ENCODE measurements at regions of chr9 and their contacts with region 1.

Region 1: DNA sequence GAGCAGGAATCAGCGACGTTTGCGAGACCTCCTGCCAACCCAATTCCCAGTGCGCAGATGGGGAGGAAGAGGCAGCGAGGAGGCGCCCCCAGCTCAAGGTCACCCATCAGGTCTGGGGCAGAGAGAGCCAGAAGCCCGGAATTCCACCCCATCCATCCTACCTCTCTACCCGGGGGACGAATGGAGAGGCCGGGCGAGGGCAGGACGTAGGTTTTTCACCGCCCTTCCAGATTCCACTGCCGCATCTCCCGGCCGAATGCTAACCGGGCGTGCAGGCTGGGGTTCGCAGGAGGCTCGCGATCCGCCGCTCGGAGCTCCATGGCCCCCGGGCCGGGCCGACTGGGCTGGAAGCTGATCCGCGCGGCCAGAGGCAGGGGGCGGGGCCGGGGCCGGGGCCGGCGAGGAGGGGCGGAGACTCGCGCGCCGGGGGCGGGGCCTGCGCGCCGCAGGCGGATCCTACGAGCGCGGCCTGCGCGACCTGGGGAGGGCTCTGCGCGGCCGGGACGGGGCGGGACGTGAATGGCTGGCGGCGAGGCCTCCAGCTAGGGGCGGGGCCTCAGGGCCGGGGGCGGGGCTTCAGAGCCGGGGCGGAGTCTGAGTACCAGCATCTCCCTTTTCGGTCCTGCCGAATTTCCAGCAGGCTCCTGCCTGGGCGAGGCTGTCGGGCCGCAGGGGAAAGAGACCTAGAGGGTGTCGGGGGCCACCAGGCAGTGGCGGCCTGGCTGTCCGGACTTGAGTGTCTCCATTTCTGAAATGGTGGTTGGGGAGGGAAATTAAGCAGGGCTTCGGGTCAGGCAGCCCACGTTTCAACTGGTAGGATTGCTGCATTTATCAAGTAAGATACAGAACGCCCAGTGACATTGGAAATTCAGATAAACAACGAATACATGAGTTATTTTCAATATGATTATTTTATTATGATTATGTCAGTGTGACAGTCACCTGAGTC is at the start of gene ST6GALNAC4:
- DNase-seq: peak; percentile 95
- ATAC-seq: peak; percentile 82
- H3K4me3 ChIP-seq: peak within 1 kb of the TSS; percentile 71 to 99 (median 79)
- H3K4me3 Mint-ChIP-seq: peak within 1 kb of the TSS; percentile 94
- H3K27ac ChIP-seq: peak within 1 kb of the TSS; percentile 89 to 91
- H3K27ac Mint-ChIP-seq: peak within 1 kb of the TSS; percentile 98
- H3K4me1 ChIP-seq: peaks cover 44 to 77% of the 10 kb centered on the region in 2 donors
- H3K4me1 Mint-ChIP-seq: peaks cover 68% of the 10 kb centered on the region
- H3K27me3 ChIP-seq: peaks cover 0 to 2% (median 0%) of the 10 kb centered on the region in 4 experiments
- H3K27me3 Mint-ChIP-seq: no peaks in the 10 kb centered on the region
- CTCF ChIP-seq: no peak
- total RNA-seq, gene ST6GALNAC4: 198 and 199 TPM in 2 replicates

Region 2: GRCh38 chr9:127568971-127569885 is 347.7 kb before region 1 on chr9:
- CTCF ChIA-PET with region 1: interaction called, 4 read pairs
- POLR2A ChIA-PET with region 1: interaction called, 3 read pairs
- intact Hi-C with region 1: loop called (anchors 1 kb)
- DNase-seq: peak; percentile 80
- ATAC-seq: peak; percentile 92
- H3K4me3 ChIP-seq: peak overlapping the region in 4 of 5 experiments; percentile 53 to 72 (median 65)
- H3K4me3 Mint-ChIP-seq: peak overlapping the region; percentile 93
- H3K27ac ChIP-seq: no peak overlapping the region
- H3K27ac Mint-ChIP-seq: peak overlapping the region; percentile 81
- H3K4me1 ChIP-seq: peaks cover 18 to 24% of the 10 kb centered on the region in 2 donors
- H3K4me1 Mint-ChIP-seq: peaks cover 14% of the 10 kb centered on the region
- H3K27me3 ChIP-seq: peaks cover 0 to 7% (median 0%) of the 10 kb centered on the region in 4 experiments
- H3K27me3 Mint-ChIP-seq: no peaks in the 10 kb centered on the region
- CTCF ChIP-seq: no peak

Region 3: GRCh38 chr9:127763918-127764384 is 153.0 kb before region 1 on chr9:
- CTCF ChIA-PET with region 1: interaction called, 14 read pairs
- POLR2A ChIA-PET with region 1: no interaction called
- intact Hi-C with region 1: no loop called
- DNase-seq: peak; percentile 44
- ATAC-seq: peak; percentile 39
- H3K4me3 ChIP-seq: no peak overlapping the region
- H3K4me3 Mint-ChIP-seq: no peak overlapping the region
- H3K27ac ChIP-seq: peak overlapping the region in 1 of 2 donors; percentile 45
- H3K27ac Mint-ChIP-seq: peak overlapping the region; percentile 73
- H3K4me1 ChIP-seq: peaks cover 22 to 44% of the 10 kb centered on the region in 2 donors
- H3K4me1 Mint-ChIP-seq: peaks cover 60% of the 10 kb centered on the region
- H3K27me3 ChIP-seq: no peaks in the 10 kb centered on the region
- H3K27me3 Mint-ChIP-seq: no peaks in the 10 kb centered on the region
- CTCF ChIP-seq: peak; percentile 34

Region 4: GRCh38 chr9:127802576-127803443 is 114.1 kb before region 1 on chr9 and contains the start of gene FPGS:
- CTCF ChIA-PET with region 1: interaction called, 16 read pairs
- POLR2A ChIA-PET with region 1: interaction called, 3 read pairs
- intact Hi-C with region 1: loop called (anchors 1 kb)
- DNase-seq: peak; percentile 93
- ATAC-seq: peak; percentile 84
- H3K4me3 ChIP-seq: peak within 1 kb of the TSS; percentile 65 to 96 (median 88)
- H3K4me3 Mint-ChIP-seq: peak within 1 kb of the TSS; percentile 91
- H3K27ac ChIP-seq: peak within 1 kb of the TSS; percentile 68 to 90
- H3K27ac Mint-ChIP-seq: peak within 1 kb of the TSS; percentile 92
- H3K4me1 ChIP-seq: peaks cover 20 to 31% of the 10 kb centered on the region in 2 donors
- H3K4me1 Mint-ChIP-seq: peaks cover 33% of the 10 kb centered on the region
- H3K27me3 ChIP-seq: no peaks in the 10 kb centered on the region
- H3K27me3 Mint-ChIP-seq: no peaks in the 10 kb centered on the region
- CTCF ChIP-seq: no peak
- total RNA-seq, gene FPGS: 136 and 137 TPM in 2 replicates

Region 5: GRCh38 chr9:127884427-127884911 is 32.5 kb before region 1 on chr9:
- CTCF ChIA-PET with region 1: interaction called, 34 read pairs
- POLR2A ChIA-PET with region 1: interaction called, 4 read pairs
- intact Hi-C with region 1: loop called (anchors 1 kb)
- DNase-seq: peak; percentile 10
- ATAC-seq: no peak
- H3K4me3 ChIP-seq: no peak overlapping the region
- H3K4me3 Mint-ChIP-seq: no peak overlapping the region
- H3K27ac ChIP-seq: no peak overlapping the region
- H3K27ac Mint-ChIP-seq: peak overlapping the region; percentile 50
- H3K4me1 ChIP-seq: peaks cover 0 to 18% of the 10 kb centered on the region in 2 donors
- H3K4me1 Mint-ChIP-seq: peaks cover 24% of the 10 kb centered on the region
- H3K27me3 ChIP-seq: no peaks in the 10 kb centered on the region
- H3K27me3 Mint-ChIP-seq: no peaks in the 10 kb centered on the region
- CTCF ChIP-seq: no peak

Region 6: GRCh38 chr9:128034821-128035764 is 118.2 kb after region 1 on chr9:
- CTCF ChIA-PET with region 1: interaction called, 11 read pairs
- POLR2A ChIA-PET with region 1: no interaction called
- intact Hi-C with region 1: no loop called
- DNase-seq: peak; percentile 88
- ATAC-seq: peak; percentile 82
- H3K4me3 ChIP-seq: no peak overlapping the region
- H3K4me3 Mint-ChIP-seq: no peak overlapping the region
- H3K27ac ChIP-seq: no peak overlapping the region
- H3K27ac Mint-ChIP-seq: peak overlapping the region; percentile 71
- H3K4me1 ChIP-seq: peaks cover 29 to 46% of the 10 kb centered on the region in 2 donors
- H3K4me1 Mint-ChIP-seq: peaks cover 33% of the 10 kb centered on the region
- H3K27me3 ChIP-seq: no peaks in the 10 kb centered on the region
- H3K27me3 Mint-ChIP-seq: no peaks in the 10 kb centered on the region
- CTCF ChIP-seq: peak; percentile 93